Activated T-helper 1 cell treated with anti-CD3 and anti-CD28 coated beads, Interleukin-12 subunit alpha, Interleukin-12 subunit beta, Interleukin-2, Interleukin-4 antibody, amounts not matched to agents 30 ng/mL and 10 ng/mL and 1 ng/mL, durations not matched to agents 14 hours and 24 hours and 36 hours (primary cell): ENCODE measurements at regions of chrX and their contacts with region 1.

Region 1: GRCh38 chrX:123859846-123860838 is at the start of gene XIAP:
- DNase-seq: peak; percentile 66
- H3K4me3 Mint-ChIP-seq: peak within 1 kb of the TSS; percentile 89
- H3K27ac Mint-ChIP-seq: peak within 1 kb of the TSS; percentile 90
- H3K4me1 Mint-ChIP-seq: peaks cover 17% of the 10 kb centered on the region
- H3K27me3 Mint-ChIP-seq: no peaks in the 10 kb centered on the region
- total RNA-seq, gene XIAP: 35.0 and 39.1 TPM in 2 replicates

Region 2: GRCh38 chrX:123878252-123878721 is 18.1 kb after region 1 on chrX:
- intact Hi-C with region 1: loop called (anchors 2 kb)
- DNase-seq: no peak
- H3K4me3 Mint-ChIP-seq: peak overlapping the region; percentile 37
- H3K27ac Mint-ChIP-seq: peak overlapping the region; percentile 71
- H3K4me1 Mint-ChIP-seq: peaks cover 20% of the 10 kb centered on the region
- H3K27me3 Mint-ChIP-seq: no peaks in the 10 kb centered on the region